CD4-positive, alpha-beta T cell (primary cell): ENCODE measurements at regions of chr14 and their contacts with region 1.

Region 1: DNA sequence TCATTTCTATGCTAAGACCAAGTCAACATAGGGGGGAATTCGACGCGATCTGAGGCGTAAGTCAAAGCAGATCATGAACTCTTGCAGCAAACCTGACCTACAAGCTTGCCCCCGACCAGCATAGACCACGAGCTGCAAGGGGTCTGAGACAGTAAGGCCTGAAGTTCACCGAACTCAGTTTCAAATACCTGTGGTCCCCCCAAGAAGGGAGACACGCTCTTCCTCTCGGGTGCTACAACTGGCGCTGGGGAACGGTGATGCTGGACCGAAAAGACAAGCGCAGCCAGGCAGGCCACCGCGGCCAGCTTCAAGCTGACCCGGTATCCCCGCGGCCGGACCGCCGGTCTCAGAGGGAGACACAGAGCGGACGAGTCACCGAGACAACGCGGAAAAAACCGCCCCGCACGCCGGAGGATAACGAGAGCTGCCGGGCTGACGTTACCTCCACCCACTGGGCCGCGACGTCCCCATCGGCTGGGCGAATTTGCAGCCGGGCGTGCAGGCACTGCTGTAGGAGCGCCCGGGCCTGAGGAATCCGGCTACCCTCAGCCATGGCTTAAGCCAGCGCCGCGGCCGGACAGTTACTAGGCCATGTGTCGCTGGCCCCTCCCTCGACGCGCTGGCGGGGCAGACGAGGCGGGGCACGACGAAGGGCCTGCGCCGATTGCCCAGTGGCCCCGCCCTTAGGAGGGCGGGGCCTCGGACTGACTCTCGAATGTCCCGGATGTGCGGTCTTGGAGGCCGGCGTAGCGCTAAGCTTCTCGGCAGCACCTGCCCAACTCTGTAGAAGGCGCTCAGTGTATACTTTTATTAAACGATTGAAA is at the start of gene DTD2:
- DNase-seq: peak; percentile 85 to 96 (median 91)
- ATAC-seq: peak; percentile 97
- H3K4me3 ChIP-seq: peak within 1 kb of the TSS; percentile 95
- H3K4me3 Mint-ChIP-seq: peak within 1 kb of the TSS; percentile 93
- H3K27ac ChIP-seq: peak within 1 kb of the TSS; percentile 39 to 71
- H3K27ac Mint-ChIP-seq: peak within 1 kb of the TSS; percentile 94
- H3K4me1 ChIP-seq: peaks cover 9% of the 10 kb centered on the region
- H3K4me1 Mint-ChIP-seq: peaks cover 35% of the 10 kb centered on the region
- H3K27me3 ChIP-seq: no peaks in the 10 kb centered on the region
- H3K27me3 Mint-ChIP-seq: no peaks in the 10 kb centered on the region
- CTCF ChIP-seq: no peak
- total RNA-seq, gene DTD2: 4.6 to 5.7 TPM

Region 2: GRCh38 chr14:30949651-30950050 is 507.4 kb before region 1 on chr14:
- CTCF ChIA-PET with region 1: no interaction called
- POLR2A ChIA-PET with region 1: no interaction called
- intact Hi-C with region 1: no loop called
- DNase-seq: no peak
- ATAC-seq: no peak
- H3K4me3 ChIP-seq: no peak overlapping the region
- H3K4me3 Mint-ChIP-seq: no peak overlapping the region
- H3K27ac ChIP-seq: no peak overlapping the region
- H3K27ac Mint-ChIP-seq: no peak overlapping the region
- H3K4me1 ChIP-seq: no peaks in the 10 kb centered on the region
- H3K4me1 Mint-ChIP-seq: no peaks in the 10 kb centered on the region
- H3K27me3 ChIP-seq: no peaks in the 10 kb centered on the region
- H3K27me3 Mint-ChIP-seq: no peaks in the 10 kb centered on the region
- CTCF ChIP-seq: no peak

Region 3: DNA sequence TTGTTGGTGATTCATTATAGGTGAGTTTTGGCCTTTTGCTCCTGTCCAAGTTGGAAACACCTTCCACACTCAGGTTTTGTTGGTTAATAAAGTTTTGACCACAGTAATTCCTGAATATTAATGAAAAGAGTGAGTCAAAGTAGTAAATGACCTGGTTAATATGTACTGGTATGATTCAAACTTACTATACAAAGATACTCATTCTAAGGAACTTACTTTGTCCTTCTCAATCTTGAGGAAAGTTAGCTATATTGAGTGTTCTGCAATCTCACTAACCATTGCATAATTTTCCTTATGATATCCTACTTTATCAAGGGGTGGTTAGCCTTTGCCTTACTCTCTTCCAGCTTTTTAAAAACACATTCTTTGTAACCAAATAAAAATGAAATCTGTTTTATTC is 228.5 kb before region 1 on chr14:
- CTCF ChIA-PET with region 1: no interaction called
- POLR2A ChIA-PET with region 1: no interaction called
- intact Hi-C with region 1: no loop called
- DNase-seq: no peak
- ATAC-seq: no peak
- H3K4me3 ChIP-seq: no peak overlapping the region
- H3K4me3 Mint-ChIP-seq: no peak overlapping the region
- H3K27ac ChIP-seq: no peak overlapping the region
- H3K27ac Mint-ChIP-seq: no peak overlapping the region
- H3K4me1 ChIP-seq: no peaks in the 10 kb centered on the region
- H3K4me1 Mint-ChIP-seq: no peaks in the 10 kb centered on the region
- H3K27me3 ChIP-seq: no peaks in the 10 kb centered on the region
- H3K27me3 Mint-ChIP-seq: no peaks in the 10 kb centered on the region
- CTCF ChIP-seq: no peak

Region 4: DNA sequence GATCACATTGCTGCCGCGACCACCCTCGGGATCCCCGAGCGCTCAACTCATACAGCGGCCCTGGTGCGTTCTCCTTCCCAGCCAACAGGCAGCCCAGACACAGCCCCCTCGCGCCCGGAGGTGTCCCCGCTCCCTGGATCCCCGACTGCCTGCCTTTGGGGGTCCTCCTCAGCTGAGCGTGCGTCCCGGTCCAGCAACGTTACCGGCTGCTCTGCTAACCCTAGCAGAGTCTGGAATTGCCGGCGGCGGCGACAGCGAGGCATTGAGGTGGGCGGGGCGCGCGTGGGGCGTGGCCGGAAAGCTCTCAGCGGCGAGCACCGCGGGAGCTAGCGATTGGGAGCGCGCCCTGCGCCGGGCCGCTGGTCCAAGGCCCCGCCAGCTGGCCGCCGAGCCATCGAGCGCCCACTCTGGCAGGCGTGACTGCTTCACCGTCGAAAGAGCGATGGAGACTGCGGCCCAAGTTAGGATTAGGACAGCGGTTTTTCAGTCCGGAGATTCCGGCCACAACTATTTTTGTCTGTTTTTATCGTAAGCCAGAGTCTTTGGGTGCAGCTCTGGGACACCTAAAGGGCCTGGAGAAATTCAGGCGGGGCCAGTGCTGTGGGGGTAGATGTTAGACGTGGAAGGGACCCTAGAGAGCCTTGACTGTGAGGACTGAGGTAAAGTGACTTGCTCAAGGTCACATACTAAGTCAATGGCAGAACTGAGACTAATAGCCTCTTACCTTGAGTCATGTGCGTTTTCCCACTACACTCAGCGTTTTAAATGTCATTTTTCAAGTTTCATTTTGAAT is 36.5 kb before region 1 on chr14 and contains the start of gene HEATR5A:
- CTCF ChIA-PET with region 1: interaction called, 4 read pairs
- POLR2A ChIA-PET with region 1: interaction called, 54 read pairs
- intact Hi-C with region 1: loop called (anchors 2 kb)
- DNase-seq: peak; percentile 83 to 96 (median 93)
- ATAC-seq: peak; percentile 96
- H3K4me3 ChIP-seq: peak within 1 kb of the TSS; percentile 99
- H3K4me3 Mint-ChIP-seq: peak within 1 kb of the TSS; percentile 99
- H3K27ac ChIP-seq: peak within 1 kb of the TSS in 1 of 2 donors; percentile 64
- H3K27ac Mint-ChIP-seq: peak within 1 kb of the TSS; percentile 89
- H3K4me1 ChIP-seq: peaks cover 4% of the 10 kb centered on the region
- H3K4me1 Mint-ChIP-seq: peaks cover 33% of the 10 kb centered on the region
- H3K27me3 ChIP-seq: no peaks in the 10 kb centered on the region
- H3K27me3 Mint-ChIP-seq: no peaks in the 10 kb centered on the region
- CTCF ChIP-seq: peak; percentile 29
- total RNA-seq, gene HEATR5A: 5.2 to 5.5 TPM

Region 5: DNA sequence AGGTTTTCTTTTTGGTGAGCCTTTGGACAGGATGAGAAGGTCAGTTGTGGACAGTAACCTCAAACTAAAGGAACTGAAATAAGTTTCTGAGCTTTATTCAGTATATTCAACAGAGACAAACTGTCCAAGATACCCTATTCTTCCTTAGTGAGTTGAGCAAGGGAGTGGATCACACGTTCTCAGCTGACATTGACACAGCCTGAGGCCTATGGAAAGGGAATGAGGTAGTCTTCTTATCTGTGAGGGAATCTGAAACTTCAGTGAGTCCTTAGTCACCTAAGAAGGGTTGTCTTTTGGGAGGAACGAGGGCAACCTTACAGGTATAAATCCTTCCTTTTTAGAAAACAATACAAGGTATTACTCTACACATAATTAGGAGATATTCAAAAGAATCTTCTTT is 99.1 kb after region 1 on chr14:
- CTCF ChIA-PET with region 1: no interaction called
- POLR2A ChIA-PET with region 1: interaction called, 3 read pairs
- intact Hi-C with region 1: loop called (anchors 2 to 5 kb)
- DNase-seq: no peak
- ATAC-seq: no peak
- H3K4me3 ChIP-seq: no peak overlapping the region
- H3K4me3 Mint-ChIP-seq: no peak overlapping the region
- H3K27ac ChIP-seq: no peak overlapping the region
- H3K27ac Mint-ChIP-seq: no peak overlapping the region
- H3K4me1 ChIP-seq: no peaks in the 10 kb centered on the region
- H3K4me1 Mint-ChIP-seq: peaks cover 11% of the 10 kb centered on the region
- H3K27me3 ChIP-seq: peaks cover 0 to 16% of the 10 kb centered on the region in 2 experiments
- H3K27me3 Mint-ChIP-seq: peaks cover 60% of the 10 kb centered on the region
- CTCF ChIP-seq: no peak

Region 6: GRCh38 chr14:31561155-31561846 is 104.2 kb after region 1 on chr14 and contains the start of gene NUBPL:
- CTCF ChIA-PET with region 1: interaction called, 4 read pairs
- POLR2A ChIA-PET with region 1: interaction called, 3 read pairs
- intact Hi-C with region 1: loop called (anchors 2 to 5 kb)
- DNase-seq: peak; percentile 94 to 99 (median 97)
- ATAC-seq: peak; percentile 91
- H3K4me3 ChIP-seq: peak within 1 kb of the TSS; percentile 84
- H3K4me3 Mint-ChIP-seq: peak within 1 kb of the TSS; percentile 95
- H3K27ac ChIP-seq: peak within 1 kb of the TSS; percentile 80 to 84
- H3K27ac Mint-ChIP-seq: peak within 1 kb of the TSS; percentile 98
- H3K4me1 ChIP-seq: no peaks in the 10 kb centered on the region
- H3K4me1 Mint-ChIP-seq: peaks cover 34% of the 10 kb centered on the region
- H3K27me3 ChIP-seq: no peaks in the 10 kb centered on the region
- H3K27me3 Mint-ChIP-seq: peaks cover 26% of the 10 kb centered on the region
- CTCF ChIP-seq: no peak
- total RNA-seq, gene NUBPL: 7.2 to 8.2 TPM